H1 (cell line): ENCODE measurements at regions of chr2 and their contacts with region 1.

Region 1: DNA sequence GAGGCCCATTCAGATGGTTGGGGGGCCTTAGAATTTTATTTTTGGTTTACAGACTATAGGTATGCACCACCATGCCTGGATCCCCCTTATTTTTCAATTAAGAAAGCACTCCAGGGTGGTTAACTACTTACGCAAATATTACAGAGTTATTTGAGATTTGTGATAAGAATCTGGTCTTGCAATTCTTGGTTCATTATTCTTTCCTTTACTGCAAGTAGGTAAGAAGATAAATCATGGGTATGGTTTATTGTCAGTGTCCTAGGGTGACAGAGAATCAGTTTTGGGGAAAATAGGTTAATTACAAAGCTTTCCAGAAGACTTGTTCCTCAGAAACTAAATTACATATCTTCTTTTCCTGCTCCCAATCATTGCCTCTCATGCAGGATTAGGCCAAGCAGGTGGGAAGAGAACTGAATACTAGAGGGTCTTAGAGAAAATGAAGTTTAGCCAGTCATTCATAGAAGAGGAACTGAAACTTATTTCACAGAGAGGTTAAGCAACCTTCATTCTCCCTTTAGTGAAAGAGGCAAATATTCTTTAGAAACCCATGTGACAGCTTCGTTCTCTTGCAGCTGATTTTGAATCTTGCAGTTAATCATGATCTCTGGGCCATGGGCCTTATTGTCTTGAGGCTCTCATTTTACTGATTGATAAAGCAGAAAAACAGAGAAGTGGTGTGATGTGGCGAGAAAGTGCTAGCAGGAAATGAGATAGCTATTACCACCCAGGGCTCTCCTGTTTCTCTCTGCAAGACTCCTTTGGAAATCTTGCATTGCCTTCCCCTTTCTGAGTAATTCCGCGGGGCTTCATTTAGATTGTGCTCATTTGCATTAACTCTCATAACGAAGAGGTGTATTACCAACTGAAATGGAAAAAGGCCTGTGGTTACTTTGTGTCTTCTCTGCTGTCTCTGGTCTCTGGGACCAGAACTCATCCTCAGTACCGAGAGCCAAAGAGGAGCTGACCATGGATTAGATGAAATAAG is 44.8 kb upstream of the ARHGAP25 start:
- DNase-seq: no peak
- H3K4me3 ChIP-seq: no peak overlapping the region
- H3K27ac ChIP-seq: no peak overlapping the region
- H3K4me1 ChIP-seq: peaks cover 0 to 15% (median 6%) of the 10 kb centered on the region in 4 experiments; a peak in 4 of 7 replicates
- H3K27me3 ChIP-seq: no peaks in the 10 kb centered on the region
- CTCF ChIP-seq: no peak
- EP300 ChIP-seq: no peak
- POLR2A ChIP-seq: no peak
- RAD21 ChIP-seq: no peak

Region 2: GRCh38 chr2:68643011-68643873 is 46.6 kb before region 1 on chr2 and contains the start of gene PROKR1:
- CTCF ChIA-PET with region 1: no interaction called
- POLR2A ChIA-PET with region 1: no interaction called
- DNase-seq: peak in 1 of 2 experiments; percentile 83
- H3K4me3 ChIP-seq: peak within 1 kb of the TSS; percentile 53 to 91 (median 73)
- H3K27ac ChIP-seq: no peak within 1 kb of the TSS
- H3K4me1 ChIP-seq: peaks cover 0 to 5% (median 2%) of the 10 kb centered on the region in 4 experiments; a peak in 5 of 7 replicates
- H3K27me3 ChIP-seq: peaks cover 2 to 29% (median 16%) of the 10 kb centered on the region in 4 experiments
- CTCF ChIP-seq: no peak
- EP300 ChIP-seq: no peak
- POLR2A ChIP-seq: 0 out of 3 replicates have a peak, but pooled peaks of 1 of the 2 experiments have one; percentile 14
- RAD21 ChIP-seq: no peak; a peak in 1 of 4 replicates
- total RNA-seq, gene PROKR1: 3.9 and 4.0 TPM in 2 replicates

Region 3: GRCh38 chr2:68653538-68653982 is 36.3 kb before region 1 on chr2:
- CTCF ChIA-PET with region 1: no interaction called
- POLR2A ChIA-PET with region 1: no interaction called
- DNase-seq: no peak
- H3K4me3 ChIP-seq: no peak overlapping the region
- H3K27ac ChIP-seq: no peak overlapping the region
- H3K4me1 ChIP-seq: no peaks in the 10 kb centered on the region; a peak in 2 of 7 replicates
- H3K27me3 ChIP-seq: no peaks in the 10 kb centered on the region
- CTCF ChIP-seq: no peak
- EP300 ChIP-seq: no peak
- POLR2A ChIP-seq: no peak
- RAD21 ChIP-seq: no peak

Region 4: DNA sequence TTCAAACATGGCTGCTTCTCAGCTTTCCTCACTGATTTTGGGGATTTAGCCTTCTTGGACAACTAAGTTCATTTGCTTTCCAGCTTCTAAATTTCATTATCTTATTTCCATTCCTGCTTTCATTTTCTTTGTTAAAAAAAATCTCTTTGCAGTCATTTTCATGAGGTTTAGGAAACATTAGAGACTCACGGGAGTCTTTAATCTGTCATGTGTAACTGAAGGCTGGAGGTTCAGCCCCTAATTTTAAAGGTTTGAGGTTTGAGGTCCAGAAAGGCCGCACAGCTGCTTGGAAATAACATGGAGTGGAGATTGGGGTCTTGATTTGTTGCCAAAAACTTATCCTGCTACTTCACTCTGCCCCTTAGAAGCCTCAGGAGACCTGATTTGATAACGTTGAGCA is 16.2 kb before region 1 on chr2:
- CTCF ChIA-PET with region 1: no interaction called
- POLR2A ChIA-PET with region 1: interaction called, 11 read pairs
- DNase-seq: no peak
- H3K4me3 ChIP-seq: no peak overlapping the region
- H3K27ac ChIP-seq: no peak overlapping the region
- H3K4me1 ChIP-seq: peaks cover 0 to 4% (median 0%) of the 10 kb centered on the region in 4 experiments; a peak in 2 of 7 replicates
- H3K27me3 ChIP-seq: no peaks in the 10 kb centered on the region
- CTCF ChIP-seq: no peak
- EP300 ChIP-seq: no peak
- POLR2A ChIP-seq: no peak
- RAD21 ChIP-seq: no peak